ENCODE measurements at regions of chr6 and their contacts with region 1.

Region 1: GRCh38 chr6:116371120-116371917 is 572 bp downstream of the DSE start:
- DNase-seq: peak; percentile 61 to 92
- H3K4me3 ChIP-seq: peak overlapping the region; percentile 77 to 86
- H3K27ac ChIP-seq: peak overlapping the region; percentile 94 to 96
- H3K4me1 ChIP-seq: peaks cover 0 to 7% of the 10 kb centered on the region in 2 donors
- H3K27me3 ChIP-seq: no peaks in the 10 kb centered on the region
- CTCF ChIP-seq: no peak

Region 2: GRCh38 chr6:116328528-116328903 is 42.8 kb before region 1 on chr6:
- intact Hi-C with region 1: loop called (anchors 5 kb)
- DNase-seq: no peak
- H3K4me3 ChIP-seq: no peak overlapping the region
- H3K27ac ChIP-seq: peak overlapping the region in 1 of 2 donors; percentile 6
- H3K4me1 ChIP-seq: peaks cover 2 to 9% of the 10 kb centered on the region in 2 donors
- H3K27me3 ChIP-seq: no peaks in the 10 kb centered on the region
- CTCF ChIP-seq: no peak

Region 3: DNA sequence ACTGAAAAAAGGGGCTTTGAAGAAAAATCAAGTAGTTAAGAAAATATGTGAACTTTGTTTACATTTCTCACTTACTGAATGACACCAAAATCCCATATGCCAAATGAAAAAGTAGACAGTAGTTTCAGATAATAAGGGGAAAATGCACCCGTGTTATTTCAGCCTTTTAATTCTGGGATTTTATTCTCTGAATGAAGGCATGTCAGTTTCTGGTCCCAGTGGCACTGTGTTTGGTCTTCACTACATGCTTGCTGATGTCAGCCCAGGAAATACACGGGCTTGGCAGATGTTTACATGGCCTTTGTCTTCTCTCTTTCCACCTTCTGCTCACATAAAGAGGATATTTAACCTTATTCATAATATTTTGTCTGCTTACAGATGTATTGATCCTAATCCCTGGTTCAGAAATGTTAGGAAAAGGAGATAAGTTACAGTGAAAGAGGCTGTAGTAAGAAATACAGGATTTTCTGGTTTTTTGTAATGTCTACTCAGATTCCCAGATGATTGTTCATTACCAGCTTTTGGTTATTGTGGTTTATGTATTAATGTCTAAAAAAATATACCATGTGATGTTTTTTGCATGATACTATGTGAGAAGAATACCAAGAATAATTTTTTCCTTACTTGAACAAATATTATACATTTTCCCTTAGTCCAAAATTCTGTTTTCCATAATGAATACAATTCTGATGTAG is 27.1 kb after region 1 on chr6:
- intact Hi-C with region 1: loop called (anchors 1 kb)
- DNase-seq: no peak
- H3K4me3 ChIP-seq: peak overlapping the region in 1 of 2 donors; percentile 29
- H3K27ac ChIP-seq: peak overlapping the region; percentile 64 to 74
- H3K4me1 ChIP-seq: peaks cover 0 to 70% of the 10 kb centered on the region in 2 donors
- H3K27me3 ChIP-seq: no peaks in the 10 kb centered on the region
- CTCF ChIP-seq: no peak

Region 4: DNA sequence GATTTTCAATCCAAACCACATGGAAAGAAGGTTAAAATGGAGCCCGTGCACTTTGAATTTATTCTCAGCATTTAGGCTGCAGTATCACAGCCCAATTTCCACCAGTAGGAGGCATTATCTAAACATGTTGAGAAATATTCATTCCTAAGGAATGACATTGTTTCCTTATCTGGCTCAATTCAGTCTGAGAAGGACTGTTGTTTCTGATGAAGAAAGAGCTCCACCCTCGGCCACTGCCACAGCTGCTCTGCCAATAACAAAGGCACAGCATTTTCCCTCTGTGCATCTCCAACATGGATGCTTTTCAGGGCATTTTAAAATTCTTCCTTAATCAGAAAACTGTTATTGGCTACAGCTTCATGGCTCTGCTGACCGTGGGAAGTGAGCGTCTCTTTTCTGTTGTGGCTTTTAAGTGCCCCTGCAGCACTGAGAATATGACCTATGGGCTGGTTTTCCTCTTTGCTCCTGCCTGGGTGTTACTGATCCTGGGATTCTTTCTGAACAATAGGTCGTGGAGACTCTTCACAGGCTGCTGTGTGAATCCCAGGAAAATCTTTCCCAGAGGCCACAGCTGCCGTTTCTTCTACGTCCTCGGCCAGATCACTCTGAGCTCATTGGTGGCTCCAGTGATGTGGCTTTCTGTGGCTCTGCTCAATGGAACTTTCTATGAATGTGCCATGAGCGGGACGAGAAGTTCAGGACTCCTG is 140.2 kb after region 1 on chr6 and contains the start of gene CALHM5:
- intact Hi-C with region 1: loop called (anchors 5 kb)
- DNase-seq: peak in 1 of 2 donors; percentile 81
- H3K4me3 ChIP-seq: peak within 1 kb of the TSS; percentile 58 to 69
- H3K27ac ChIP-seq: peak within 1 kb of the TSS; percentile 92 to 93
- H3K4me1 ChIP-seq: peaks cover 0 to 2% of the 10 kb centered on the region in 2 donors
- H3K27me3 ChIP-seq: no peaks in the 10 kb centered on the region
- CTCF ChIP-seq: peak; percentile 70 to 80 (median 76)
- total RNA-seq, gene CALHM5: 3.4 TPM

Region 5: GRCh38 chr6:116888732-116889360 is 517.5 kb after region 1 on chr6:
- intact Hi-C with region 1: no loop called
- DNase-seq: no peak
- H3K4me3 ChIP-seq: no peak overlapping the region
- H3K27ac ChIP-seq: no peak overlapping the region
- H3K4me1 ChIP-seq: no peaks in the 10 kb centered on the region
- H3K27me3 ChIP-seq: no peaks in the 10 kb centered on the region
- CTCF ChIP-seq: no peak